CD4-positive, alpha-beta T cell (primary cell): ENCODE measurements at regions of chr14 and their contacts with region 1.

Region 1: DNA sequence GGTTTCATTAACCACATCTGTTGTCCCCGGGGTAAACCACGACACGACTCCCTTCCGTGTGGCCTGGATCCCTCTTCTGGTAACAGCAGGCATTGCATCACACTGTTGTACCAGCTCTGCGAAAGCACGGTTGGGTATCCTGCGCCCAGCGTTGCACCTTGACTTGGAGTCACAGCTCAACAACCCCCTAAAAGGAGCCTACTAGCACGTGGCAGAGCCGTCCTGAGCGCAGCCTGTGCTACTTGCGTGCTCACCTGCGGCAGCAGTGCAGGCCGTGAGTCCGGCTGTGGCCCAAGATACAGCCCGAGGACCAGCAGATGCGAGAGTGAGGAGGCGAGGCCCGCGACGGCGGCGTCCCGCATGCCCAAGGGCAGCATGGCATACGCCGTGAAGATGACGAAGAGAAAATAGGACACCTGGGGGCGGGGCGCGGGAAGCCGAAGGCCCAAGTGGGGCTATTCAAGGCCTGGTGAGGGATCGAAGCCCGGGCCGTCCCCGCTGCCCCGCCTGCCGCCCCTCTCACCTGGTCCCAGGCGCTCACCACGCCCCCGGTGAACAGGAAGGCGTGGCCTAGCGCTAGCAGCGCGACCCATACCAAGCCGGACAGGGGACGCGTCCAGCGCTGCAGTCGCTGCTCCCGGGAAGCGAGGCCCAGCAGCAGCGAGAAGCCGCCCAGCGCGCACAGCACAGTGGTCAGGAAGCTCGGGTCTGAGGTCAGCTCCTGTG is 2.4 kb downstream of the ADCY4 start:
- DNase-seq: peak; percentile 75 to 95 (median 84)
- ATAC-seq: peak; percentile 93
- H3K4me3 ChIP-seq: peak overlapping the region; percentile 48
- H3K4me3 Mint-ChIP-seq: peak overlapping the region; percentile 86
- H3K27ac ChIP-seq: no peak overlapping the region
- H3K27ac Mint-ChIP-seq: peak overlapping the region; percentile 52
- H3K4me1 ChIP-seq: peaks cover 78% of the 10 kb centered on the region
- H3K4me1 Mint-ChIP-seq: peaks cover 59% of the 10 kb centered on the region
- H3K27me3 ChIP-seq: peaks cover 26 to 27% of the 10 kb centered on the region in 2 experiments
- H3K27me3 Mint-ChIP-seq: peaks cover 49% of the 10 kb centered on the region
- CTCF ChIP-seq: peak; percentile 81

Region 2: GRCh38 chr14:24284491-24285035 is 47.9 kb before region 1 on chr14:
- CTCF ChIA-PET with region 1: no interaction called
- POLR2A ChIA-PET with region 1: no interaction called
- intact Hi-C with region 1: no loop called
- DNase-seq: no peak
- ATAC-seq: no peak
- H3K4me3 ChIP-seq: no peak overlapping the region
- H3K4me3 Mint-ChIP-seq: no peak overlapping the region
- H3K27ac ChIP-seq: no peak overlapping the region
- H3K27ac Mint-ChIP-seq: no peak overlapping the region
- H3K4me1 ChIP-seq: peaks cover 10% of the 10 kb centered on the region
- H3K4me1 Mint-ChIP-seq: peaks cover 9% of the 10 kb centered on the region
- H3K27me3 ChIP-seq: no peaks in the 10 kb centered on the region
- H3K27me3 Mint-ChIP-seq: no peaks in the 10 kb centered on the region
- CTCF ChIP-seq: no peak

Region 3: GRCh38 chr14:24299255-24300195 is 32.9 kb before region 1 on chr14 and contains the starts of genes DHRS1 and NOP9:
- CTCF ChIA-PET with region 1: interaction called, 17 read pairs
- POLR2A ChIA-PET with region 1: interaction called, 5 read pairs
- intact Hi-C with region 1: no loop called
- DNase-seq: peak; percentile 86 to 98 (median 92)
- ATAC-seq: peak; percentile 77
- H3K4me3 ChIP-seq: peak within 1 kb of the TSS; percentile 87
- H3K4me3 Mint-ChIP-seq: peak within 1 kb of the TSS; percentile 99
- H3K27ac ChIP-seq: peak within 1 kb of the TSS; percentile 81 to 87
- H3K27ac Mint-ChIP-seq: peak within 1 kb of the TSS; percentile 98
- H3K4me1 ChIP-seq: peaks cover 56% of the 10 kb centered on the region
- H3K4me1 Mint-ChIP-seq: peaks cover 64% of the 10 kb centered on the region
- H3K27me3 ChIP-seq: no peaks in the 10 kb centered on the region
- H3K27me3 Mint-ChIP-seq: no peaks in the 10 kb centered on the region
- CTCF ChIP-seq: no peak
- total RNA-seq, gene DHRS1: 21.5 to 23.5 TPM
- total RNA-seq, gene NOP9: 25.9 to 27.5 TPM

Region 4: GRCh38 chr14:24317141-24317928 is 15.1 kb before region 1 on chr14:
- CTCF ChIA-PET with region 1: interaction called, 10 read pairs
- POLR2A ChIA-PET with region 1: interaction called, 30 read pairs
- intact Hi-C with region 1: no loop called
- DNase-seq: no peak
- ATAC-seq: no peak
- H3K4me3 ChIP-seq: no peak overlapping the region
- H3K4me3 Mint-ChIP-seq: no peak overlapping the region
- H3K27ac ChIP-seq: no peak overlapping the region
- H3K27ac Mint-ChIP-seq: no peak overlapping the region
- H3K4me1 ChIP-seq: peaks cover 43% of the 10 kb centered on the region
- H3K4me1 Mint-ChIP-seq: peaks cover 41% of the 10 kb centered on the region
- H3K27me3 ChIP-seq: no peaks in the 10 kb centered on the region
- H3K27me3 Mint-ChIP-seq: peaks cover 6% of the 10 kb centered on the region
- CTCF ChIP-seq: no peak

Region 5: DNA sequence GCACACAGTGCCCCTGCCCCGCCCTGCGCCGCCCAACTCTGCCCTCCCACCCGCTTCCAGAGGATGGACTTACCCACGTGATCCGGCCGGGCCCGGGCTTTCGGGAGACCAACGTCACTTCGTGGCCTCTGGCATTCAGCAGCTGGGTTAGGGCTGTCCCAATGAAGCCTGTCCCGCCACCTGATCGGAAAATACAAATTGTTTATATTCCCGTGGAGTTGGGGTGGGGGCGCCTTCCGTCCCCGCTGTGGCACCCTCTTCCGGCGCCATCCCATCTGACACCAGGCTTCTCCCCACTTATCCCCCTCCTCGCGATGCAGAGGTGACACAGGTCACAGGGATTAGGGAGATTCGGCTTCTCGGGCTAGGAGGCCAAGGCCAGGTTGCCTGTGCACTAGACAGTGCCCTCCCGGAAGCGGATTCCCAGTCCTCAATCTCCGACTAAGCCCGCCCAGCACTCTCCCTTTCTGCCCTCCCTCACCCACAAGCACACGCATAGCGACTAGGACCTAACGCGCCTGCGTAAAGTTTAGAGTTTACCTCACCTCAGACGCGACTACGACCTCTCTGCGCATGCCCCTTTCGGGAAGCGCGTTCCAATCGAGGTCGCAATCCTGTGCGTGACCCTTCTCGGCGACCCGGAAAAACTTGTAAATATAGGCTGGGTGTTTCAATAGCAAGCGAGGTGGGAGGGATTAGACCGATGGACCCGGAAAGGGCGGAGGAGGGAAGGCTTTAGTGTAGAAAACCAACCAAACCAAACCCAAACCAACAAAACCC is 110.0 kb after region 1 on chr14 and contains the start of gene SDR39U1:
- CTCF ChIA-PET with region 1: interaction called, 64 read pairs
- POLR2A ChIA-PET with region 1: interaction called, 270 read pairs
- intact Hi-C with region 1: no loop called
- DNase-seq: peak; percentile 90 to 100 (median 96)
- ATAC-seq: peak; percentile 86
- H3K4me3 ChIP-seq: peak within 1 kb of the TSS; percentile 88
- H3K4me3 Mint-ChIP-seq: peak within 1 kb of the TSS; percentile 88
- H3K27ac ChIP-seq: peak within 1 kb of the TSS; percentile 93 to 99
- H3K27ac Mint-ChIP-seq: peak within 1 kb of the TSS; percentile 90
- H3K4me1 ChIP-seq: peaks cover 32% of the 10 kb centered on the region
- H3K4me1 Mint-ChIP-seq: peaks cover 53% of the 10 kb centered on the region
- H3K27me3 ChIP-seq: no peaks in the 10 kb centered on the region
- H3K27me3 Mint-ChIP-seq: no peaks in the 10 kb centered on the region
- CTCF ChIP-seq: no peak
- total RNA-seq, gene SDR39U1: 71.7 to 74.7 TPM

Region 6: DNA sequence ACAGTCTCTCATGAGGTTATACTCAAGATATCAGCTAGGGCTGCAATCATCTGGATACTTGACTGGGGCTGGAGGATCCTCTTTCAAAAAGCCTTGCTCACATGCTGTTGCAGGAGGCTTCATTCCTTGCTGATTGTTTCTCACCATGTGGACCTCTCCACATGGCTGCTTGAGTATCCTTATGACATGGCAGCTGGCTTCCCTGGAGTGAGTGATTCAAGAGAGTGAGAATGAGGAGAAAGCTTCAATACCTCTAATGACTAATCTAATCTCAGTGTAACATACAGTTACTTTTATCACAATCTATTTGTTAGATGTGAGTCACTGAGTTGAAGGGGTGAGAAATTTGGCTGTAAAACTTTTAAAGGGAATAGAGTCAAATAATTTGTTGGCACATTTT is 124.5 kb after region 1 on chr14:
- CTCF ChIA-PET with region 1: no interaction called
- POLR2A ChIA-PET with region 1: no interaction called
- intact Hi-C with region 1: no loop called
- DNase-seq: no peak
- ATAC-seq: no peak
- H3K4me3 ChIP-seq: no peak overlapping the region
- H3K4me3 Mint-ChIP-seq: no peak overlapping the region
- H3K27ac ChIP-seq: no peak overlapping the region
- H3K27ac Mint-ChIP-seq: no peak overlapping the region
- H3K4me1 ChIP-seq: no peaks in the 10 kb centered on the region
- H3K4me1 Mint-ChIP-seq: no peaks in the 10 kb centered on the region
- H3K27me3 ChIP-seq: no peaks in the 10 kb centered on the region
- H3K27me3 Mint-ChIP-seq: no peaks in the 10 kb centered on the region
- CTCF ChIP-seq: no peak

Region 7: DNA sequence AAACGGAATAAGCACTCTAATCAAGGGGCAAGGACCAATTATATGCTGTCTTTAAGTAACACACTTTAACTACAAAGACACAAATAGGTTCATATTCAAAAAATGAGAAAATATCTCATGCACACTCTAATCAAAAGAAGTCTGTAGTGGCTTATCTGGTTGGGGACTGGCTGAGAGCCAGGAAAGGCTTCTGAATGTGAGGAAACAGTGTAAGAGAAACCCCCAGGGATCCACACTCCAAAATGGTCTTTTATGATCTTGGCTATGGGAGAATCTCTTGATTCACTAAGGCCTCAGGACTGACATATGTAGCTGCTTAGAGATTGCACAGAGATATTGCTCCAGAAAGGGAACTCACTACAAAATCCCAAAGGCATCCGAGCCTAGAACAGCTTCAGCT is 233.3 kb after region 1 on chr14:
- CTCF ChIA-PET with region 1: no interaction called
- POLR2A ChIA-PET with region 1: no interaction called
- intact Hi-C with region 1: no loop called
- DNase-seq: no peak
- ATAC-seq: no peak
- H3K4me3 ChIP-seq: no peak overlapping the region
- H3K4me3 Mint-ChIP-seq: no peak overlapping the region
- H3K27ac ChIP-seq: no peak overlapping the region
- H3K27ac Mint-ChIP-seq: no peak overlapping the region
- H3K4me1 ChIP-seq: no peaks in the 10 kb centered on the region
- H3K4me1 Mint-ChIP-seq: no peaks in the 10 kb centered on the region
- H3K27me3 ChIP-seq: peaks cover 0 to 9% of the 10 kb centered on the region in 2 experiments
- H3K27me3 Mint-ChIP-seq: peaks cover 14% of the 10 kb centered on the region
- CTCF ChIP-seq: no peak